PC-9 (cell line): ENCODE measurements at regions of chr7 and their contacts with region 1.

Region 1: GRCh38 chr7:73482746-73483145 is 39.3 kb downstream of the BAZ1B start:
- DNase-seq: no peak
- H3K4me3 ChIP-seq: no peak overlapping the region
- H3K27ac ChIP-seq: no peak overlapping the region
- H3K4me1 ChIP-seq: no peaks in the 10 kb centered on the region
- H3K27me3 ChIP-seq: no peaks in the 10 kb centered on the region
- CTCF ChIP-seq: no peak

Region 2: GRCh38 chr7:73466112-73466511 is 16.6 kb before region 1 on chr7:
- CTCF ChIA-PET with region 1: no interaction called
- POLR2A ChIA-PET with region 1: interaction called, 4 read pairs
- intact Hi-C with region 1: loop called (anchors 1 kb)
- DNase-seq: no peak
- H3K4me3 ChIP-seq: no peak overlapping the region
- H3K27ac ChIP-seq: peak overlapping the region; percentile 54
- H3K4me1 ChIP-seq: no peaks in the 10 kb centered on the region
- H3K27me3 ChIP-seq: no peaks in the 10 kb centered on the region
- CTCF ChIP-seq: no peak

Region 3: DNA sequence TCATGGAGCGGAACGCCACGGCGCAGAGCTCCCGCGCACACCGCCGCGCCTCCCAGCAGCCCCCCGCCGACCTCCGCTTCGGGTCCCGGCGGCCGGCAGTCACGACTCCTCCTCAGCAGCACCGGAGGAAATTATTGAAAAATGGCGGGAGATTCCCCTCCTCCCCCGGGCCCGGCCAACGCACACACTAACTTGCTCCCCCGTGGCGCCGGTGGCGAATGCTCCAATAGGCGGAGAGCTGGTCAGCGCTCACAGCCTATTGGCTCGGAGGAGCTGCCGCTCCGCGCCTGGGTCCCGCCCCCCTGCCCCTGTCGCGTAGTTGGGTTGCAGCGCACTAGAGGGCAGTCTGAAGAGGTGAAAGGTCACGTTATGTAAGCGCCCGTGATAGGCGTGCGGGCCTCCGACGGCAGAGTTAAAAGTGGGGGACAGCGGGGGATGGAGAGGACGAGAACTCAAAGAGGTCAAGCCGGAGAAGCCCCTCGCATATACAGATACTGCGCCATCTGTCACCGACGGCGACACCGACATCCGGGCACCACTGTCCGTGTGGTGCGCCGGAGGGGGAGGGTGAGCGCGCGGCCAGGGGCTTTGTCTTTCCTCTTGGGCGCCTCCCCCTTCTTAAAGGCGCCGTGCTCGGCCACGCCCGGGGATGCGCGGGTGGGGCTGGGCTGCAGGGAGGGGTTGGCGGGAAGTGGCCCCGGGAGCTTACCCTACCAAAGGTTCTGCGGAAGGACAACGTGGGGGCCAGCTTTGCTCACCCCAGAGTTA is 39.5 kb after region 1 on chr7 and contains the start of gene BAZ1B:
- CTCF ChIA-PET with region 1: no interaction called
- POLR2A ChIA-PET with region 1: no interaction called
- intact Hi-C with region 1: no loop called
- DNase-seq: peak; percentile 93 to 98
- H3K4me3 ChIP-seq: peak within 1 kb of the TSS; percentile 84
- H3K27ac ChIP-seq: peak within 1 kb of the TSS; percentile 39
- H3K4me1 ChIP-seq: peaks cover 28% of the 10 kb centered on the region
- H3K27me3 ChIP-seq: no peaks in the 10 kb centered on the region
- CTCF ChIP-seq: no peak
- total RNA-seq, gene BAZ1B: 73.6 and 88.4 TPM in 2 replicates

Region 4: DNA sequence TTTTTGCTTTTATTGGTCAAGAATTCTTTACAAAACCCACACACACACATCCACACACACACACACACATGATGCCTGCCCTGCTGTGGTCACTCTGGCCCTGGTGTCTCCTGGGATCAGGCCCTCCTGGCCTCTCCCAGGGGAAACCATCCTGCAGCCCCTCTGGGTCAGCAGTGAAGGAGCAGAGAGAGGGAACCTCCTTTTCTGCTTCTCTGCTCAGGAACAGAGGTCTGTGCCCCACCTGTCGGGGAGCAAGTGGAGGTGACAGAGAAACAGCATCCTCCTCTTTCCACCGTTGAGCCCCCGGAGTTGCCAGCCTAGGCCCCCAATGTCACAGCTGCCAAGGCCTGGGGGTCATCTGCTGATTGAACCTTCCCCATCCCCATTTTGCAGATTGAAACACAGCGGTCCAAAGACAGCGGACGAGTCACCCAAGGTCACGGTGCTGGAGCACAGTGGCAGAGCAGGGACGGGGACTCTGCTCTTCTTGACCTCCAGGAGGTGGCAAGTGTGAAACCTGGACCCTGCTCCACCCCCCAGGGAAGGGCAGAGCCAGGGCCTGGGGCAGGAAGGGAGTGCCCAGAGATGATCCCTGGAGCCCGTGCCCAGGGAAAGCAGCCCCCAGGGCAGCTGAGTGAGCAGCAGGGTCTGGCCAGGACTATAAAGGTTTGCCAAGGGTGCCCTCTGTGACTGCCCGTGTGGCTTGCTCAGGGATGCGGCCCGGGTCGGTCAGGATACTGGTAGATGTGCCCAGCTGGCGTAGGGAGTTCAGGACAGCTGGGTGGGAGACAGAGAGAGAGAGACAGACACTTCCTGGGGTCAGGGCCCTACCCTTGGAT is 110.7 kb after region 1 on chr7:
- CTCF ChIA-PET with region 1: no interaction called
- POLR2A ChIA-PET with region 1: no interaction called
- intact Hi-C with region 1: no loop called
- DNase-seq: no peak
- H3K4me3 ChIP-seq: no peak overlapping the region
- H3K27ac ChIP-seq: no peak overlapping the region
- H3K4me1 ChIP-seq: peaks cover 5% of the 10 kb centered on the region; the same call in 1 of the 2 replicates
- H3K27me3 ChIP-seq: no peaks in the 10 kb centered on the region
- CTCF ChIP-seq: no peak